ENCODE measurements at regions of chr14 and their contacts with region 1.

Region 1: DNA sequence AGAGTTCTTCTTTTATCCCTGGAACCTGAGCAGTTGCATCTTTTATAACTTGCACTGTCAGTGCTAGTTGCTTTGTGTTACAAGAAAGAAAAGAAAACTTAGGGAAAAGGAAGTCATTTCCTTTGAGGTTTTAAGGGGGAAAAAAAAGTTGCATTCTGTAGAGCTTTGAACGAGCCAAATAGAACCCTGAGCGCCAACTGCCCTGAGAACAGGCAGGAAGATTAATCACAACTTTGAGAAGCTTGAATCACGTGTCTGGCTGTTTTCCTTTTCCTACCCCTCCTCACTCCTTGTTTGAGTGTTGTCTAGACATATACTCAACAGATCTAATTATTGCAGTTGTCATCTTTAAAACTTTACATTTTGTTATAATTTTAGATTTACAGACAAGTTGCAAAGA is 12.5 kb downstream of the PCNX1 start:
- DNase-seq: peak in 5 of 14 experiments; percentile 24 to 58 (median 45)
- ATAC-seq: peak; percentile 59
- H3K4me3 ChIP-seq: no peak overlapping the region
- H3K4me3 Mint-ChIP-seq: peak overlapping the region; percentile 48
- H3K27ac ChIP-seq: peak overlapping the region in 1 of 2 donors; percentile 28
- H3K27ac Mint-ChIP-seq: peak overlapping the region; percentile 88
- H3K4me1 ChIP-seq: peaks cover 28% of the 10 kb centered on the region
- H3K4me1 Mint-ChIP-seq: peaks cover 95% of the 10 kb centered on the region
- H3K27me3 ChIP-seq: no peaks in the 10 kb centered on the region
- H3K27me3 Mint-ChIP-seq: no peaks in the 10 kb centered on the region
- CTCF ChIP-seq: no peak

Region 2: DNA sequence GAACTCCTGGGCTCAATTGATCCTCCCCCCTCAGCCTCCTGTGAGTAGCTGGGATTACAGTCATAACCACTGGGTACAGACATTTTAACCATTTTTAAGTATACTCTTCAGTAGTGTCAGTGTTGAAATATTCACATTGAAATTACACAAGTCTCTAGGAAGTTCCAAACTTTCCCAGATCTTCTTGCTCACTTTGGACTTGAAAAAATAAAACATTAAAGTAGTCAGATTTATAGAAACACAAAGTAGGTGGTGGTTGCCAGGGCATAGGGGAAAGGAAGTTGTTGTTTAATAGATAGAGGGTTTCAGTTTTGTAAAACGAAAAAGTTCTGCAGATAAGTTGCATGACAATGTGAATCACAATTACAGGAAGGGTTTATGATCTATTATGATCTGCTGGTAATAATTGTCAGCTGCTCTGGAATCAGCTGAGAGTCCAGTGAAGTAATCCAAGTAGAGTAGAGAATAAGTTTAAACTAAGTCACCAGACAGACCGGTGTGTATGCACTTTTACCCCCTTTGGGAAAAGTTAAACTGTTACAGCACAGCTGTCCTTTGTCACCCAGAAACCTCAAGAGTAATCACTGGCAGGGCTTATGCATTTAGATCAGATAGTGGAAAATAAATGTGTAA is 14.8 kb after region 1 on chr14:
- CTCF ChIA-PET with region 1: interaction called, 3 read pairs
- POLR2A ChIA-PET with region 1: interaction called, 7 read pairs
- intact Hi-C with region 1: loop called in 1 of 2 experiments (anchors 2 kb)
- DNase-seq: peak in 3 of 14 experiments; percentile 27 to 46 (median 27)
- ATAC-seq: peak; percentile 66
- H3K4me3 ChIP-seq: peak overlapping the region; percentile 26
- H3K4me3 Mint-ChIP-seq: peak overlapping the region; percentile 80
- H3K27ac ChIP-seq: peak overlapping the region; percentile 27 to 68
- H3K27ac Mint-ChIP-seq: peak overlapping the region; percentile 78
- H3K4me1 ChIP-seq: peaks cover 18% of the 10 kb centered on the region
- H3K4me1 Mint-ChIP-seq: peaks cover 90% of the 10 kb centered on the region
- H3K27me3 ChIP-seq: no peaks in the 10 kb centered on the region
- H3K27me3 Mint-ChIP-seq: no peaks in the 10 kb centered on the region
- CTCF ChIP-seq: no peak

Region 3: GRCh38 chr14:71339650-71340415 is 420.1 kb after region 1 on chr14:
- CTCF ChIA-PET with region 1: no interaction called
- POLR2A ChIA-PET with region 1: no interaction called
- intact Hi-C with region 1: no loop called
- DNase-seq: no peak
- ATAC-seq: no peak
- H3K4me3 ChIP-seq: no peak overlapping the region
- H3K4me3 Mint-ChIP-seq: no peak overlapping the region
- H3K27ac ChIP-seq: no peak overlapping the region
- H3K27ac Mint-ChIP-seq: no peak overlapping the region
- H3K4me1 ChIP-seq: no peaks in the 10 kb centered on the region
- H3K4me1 Mint-ChIP-seq: peaks cover 24% of the 10 kb centered on the region
- H3K27me3 ChIP-seq: no peaks in the 10 kb centered on the region
- H3K27me3 Mint-ChIP-seq: no peaks in the 10 kb centered on the region
- CTCF ChIP-seq: no peak